CD8-positive, alpha-beta T cell (primary cell): ENCODE measurements at regions of chr2 and their contacts with region 1.

Region 1: GRCh38 chr2:160406591-160407392 is 86.8 kb downstream of the RBMS1 start:
- DNase-seq: peak; percentile 56 to 97 (median 74)
- ATAC-seq: peak; percentile 84
- H3K4me3 ChIP-seq: peak overlapping the region; percentile 52 to 70
- H3K4me3 Mint-ChIP-seq: peak overlapping the region; percentile 93
- H3K27ac ChIP-seq: peak overlapping the region; percentile 73
- H3K27ac Mint-ChIP-seq: peak overlapping the region; percentile 98
- H3K4me1 ChIP-seq: peaks cover 73% of the 10 kb centered on the region
- H3K4me1 Mint-ChIP-seq: peaks cover 82% of the 10 kb centered on the region
- H3K27me3 ChIP-seq: no peaks in the 10 kb centered on the region
- H3K27me3 Mint-ChIP-seq: no peaks in the 10 kb centered on the region
- CTCF ChIP-seq: no peak

Region 2: DNA sequence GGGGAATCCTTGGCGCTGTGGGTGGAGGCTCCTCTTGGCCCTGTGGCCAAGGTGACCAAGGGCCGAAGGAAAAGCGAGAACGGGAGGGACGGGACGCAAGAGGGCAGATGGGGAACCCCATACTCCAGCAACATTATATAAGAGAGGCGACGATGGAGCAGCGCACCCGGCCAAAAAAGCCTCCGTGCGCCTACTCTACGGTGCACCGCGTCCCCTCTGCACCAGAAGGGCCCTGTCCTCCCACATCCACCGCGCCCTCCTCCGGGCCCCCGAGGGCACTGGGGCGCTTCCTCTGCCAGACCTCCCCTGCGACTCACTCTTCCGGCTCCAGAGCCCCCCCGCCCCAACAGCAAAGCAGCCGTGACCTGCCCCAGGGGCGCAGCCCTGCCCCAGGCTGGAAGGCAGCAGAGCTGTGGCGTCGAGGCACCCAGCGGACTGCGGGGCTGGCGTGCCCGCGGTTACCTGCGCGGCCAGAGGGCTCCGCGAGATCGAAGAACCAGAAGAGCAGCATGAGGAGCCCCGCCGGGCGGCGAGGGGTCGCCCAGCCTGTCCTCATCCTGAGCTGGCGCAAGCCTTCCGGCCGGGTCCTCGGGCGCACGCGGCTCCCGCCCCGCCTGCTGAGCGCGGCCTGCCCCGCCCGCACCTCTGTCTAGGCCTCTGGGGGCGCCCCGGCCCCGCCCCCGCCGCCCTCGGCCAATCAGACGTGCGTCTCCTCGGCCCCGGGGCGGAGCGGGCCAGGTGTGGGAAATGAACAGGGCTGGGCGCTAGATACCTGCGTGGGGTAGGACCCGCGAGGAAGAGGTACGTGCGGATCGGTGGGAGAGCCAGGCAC is 502.4 kb before region 1 on chr2:
- CTCF ChIA-PET with region 1: no interaction called
- POLR2A ChIA-PET with region 1: no interaction called
- intact Hi-C with region 1: loop called in 1 of 2 experiments (anchors 5 kb)
- DNase-seq: peak; percentile 68 to 90 (median 81)
- ATAC-seq: peak; percentile 81
- H3K4me3 ChIP-seq: peak within 1 kb of the TSS; percentile 91 to 97
- H3K4me3 Mint-ChIP-seq: peak within 1 kb of the TSS; percentile 98
- H3K27ac ChIP-seq: peak within 1 kb of the TSS; percentile 90 to 94
- H3K27ac Mint-ChIP-seq: peak within 1 kb of the TSS; percentile 98
- H3K4me1 ChIP-seq: peaks cover 12% of the 10 kb centered on the region
- H3K4me1 Mint-ChIP-seq: peaks cover 46% of the 10 kb centered on the region
- H3K27me3 ChIP-seq: no peaks in the 10 kb centered on the region
- H3K27me3 Mint-ChIP-seq: no peaks in the 10 kb centered on the region
- CTCF ChIP-seq: no peak

Region 3: GRCh38 chr2:160394153-160394552 is 12.6 kb before region 1 on chr2:
- CTCF ChIA-PET with region 1: interaction called, 4 read pairs
- POLR2A ChIA-PET with region 1: interaction called, 10 read pairs
- intact Hi-C with region 1: loop called (anchors 1 kb)
- DNase-seq: peak in 2 of 9 experiments; percentile 69 to 80
- ATAC-seq: peak; percentile 92
- H3K4me3 ChIP-seq: peak overlapping the region in 1 of 2 experiments; percentile 21
- H3K4me3 Mint-ChIP-seq: peak overlapping the region; percentile 50
- H3K27ac ChIP-seq: peak overlapping the region in 1 of 2 experiments; percentile 49
- H3K27ac Mint-ChIP-seq: peak overlapping the region; percentile 86
- H3K4me1 ChIP-seq: peaks cover 88% of the 10 kb centered on the region
- H3K4me1 Mint-ChIP-seq: peaks cover 64% of the 10 kb centered on the region
- H3K27me3 ChIP-seq: no peaks in the 10 kb centered on the region
- H3K27me3 Mint-ChIP-seq: no peaks in the 10 kb centered on the region
- CTCF ChIP-seq: no peak

Region 4: DNA sequence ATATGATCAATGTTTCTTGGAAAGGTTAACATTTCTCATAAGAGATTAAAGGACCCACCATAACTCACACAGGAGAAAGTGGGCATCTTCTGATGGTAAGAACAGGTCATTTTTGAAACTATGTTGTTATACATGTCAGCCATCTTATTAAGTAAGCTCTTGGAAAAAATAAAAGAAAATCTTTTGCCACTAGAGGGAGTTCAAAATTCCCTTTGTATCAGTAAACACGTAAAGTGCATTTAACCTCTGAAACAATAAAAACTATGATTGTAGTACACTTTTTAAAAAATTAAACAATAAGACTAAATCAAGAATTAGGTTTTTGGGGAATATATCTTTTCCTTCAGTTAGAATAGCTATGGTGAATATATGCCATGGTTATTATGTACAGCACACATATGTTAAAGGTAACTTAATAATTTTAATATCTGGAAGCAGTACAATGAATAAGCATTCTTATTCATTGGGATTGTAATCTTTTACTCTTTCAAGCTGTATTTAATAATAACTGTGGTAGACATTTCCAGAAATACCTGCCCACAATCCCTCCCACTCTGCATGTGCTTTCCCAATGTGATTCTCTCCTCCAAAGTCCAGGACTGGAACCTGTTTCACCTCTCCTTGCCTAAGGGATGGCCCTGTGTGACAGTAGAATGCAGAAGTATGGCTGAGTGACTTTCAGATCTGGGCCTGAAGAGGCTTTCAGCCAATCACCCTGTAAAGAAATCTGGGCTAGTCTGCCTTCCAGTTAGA is 22.6 kb after region 1 on chr2:
- CTCF ChIA-PET with region 1: interaction called, 16 read pairs
- POLR2A ChIA-PET with region 1: interaction called, 32 read pairs
- intact Hi-C with region 1: loop called (anchors 1 kb)
- DNase-seq: peak in 2 of 9 experiments; percentile 72 to 81
- ATAC-seq: peak; percentile 53
- H3K4me3 ChIP-seq: no peak overlapping the region
- H3K4me3 Mint-ChIP-seq: peak overlapping the region; percentile 26
- H3K27ac ChIP-seq: peak overlapping the region in 1 of 2 experiments; percentile 77
- H3K27ac Mint-ChIP-seq: peak overlapping the region; percentile 92
- H3K4me1 ChIP-seq: peaks cover 42% of the 10 kb centered on the region
- H3K4me1 Mint-ChIP-seq: peaks cover 71% of the 10 kb centered on the region
- H3K27me3 ChIP-seq: no peaks in the 10 kb centered on the region
- H3K27me3 Mint-ChIP-seq: no peaks in the 10 kb centered on the region
- CTCF ChIP-seq: peak; percentile 84

Region 5: GRCh38 chr2:160454070-160454797 is 47.4 kb after region 1 on chr2:
- CTCF ChIA-PET with region 1: no interaction called
- POLR2A ChIA-PET with region 1: no interaction called
- intact Hi-C with region 1: no loop called
- DNase-seq: no peak
- ATAC-seq: no peak
- H3K4me3 ChIP-seq: no peak overlapping the region
- H3K4me3 Mint-ChIP-seq: no peak overlapping the region
- H3K27ac ChIP-seq: no peak overlapping the region
- H3K27ac Mint-ChIP-seq: no peak overlapping the region
- H3K4me1 ChIP-seq: peaks cover 7% of the 10 kb centered on the region
- H3K4me1 Mint-ChIP-seq: peaks cover 35% of the 10 kb centered on the region
- H3K27me3 ChIP-seq: no peaks in the 10 kb centered on the region
- H3K27me3 Mint-ChIP-seq: no peaks in the 10 kb centered on the region
- CTCF ChIP-seq: no peak

Region 6: GRCh38 chr2:160464996-160465395 is 58.2 kb after region 1 on chr2:
- CTCF ChIA-PET with region 1: no interaction called
- POLR2A ChIA-PET with region 1: no interaction called
- intact Hi-C with region 1: no loop called
- DNase-seq: no peak
- ATAC-seq: no peak
- H3K4me3 ChIP-seq: no peak overlapping the region
- H3K4me3 Mint-ChIP-seq: no peak overlapping the region
- H3K27ac ChIP-seq: no peak overlapping the region
- H3K27ac Mint-ChIP-seq: no peak overlapping the region
- H3K4me1 ChIP-seq: no peaks in the 10 kb centered on the region
- H3K4me1 Mint-ChIP-seq: peaks cover 69% of the 10 kb centered on the region
- H3K27me3 ChIP-seq: no peaks in the 10 kb centered on the region
- H3K27me3 Mint-ChIP-seq: no peaks in the 10 kb centered on the region
- CTCF ChIP-seq: no peak

Region 7: GRCh38 chr2:161160226-161161069 is 753.7 kb after region 1 on chr2 and contains the start of gene TANK:
- CTCF ChIA-PET with region 1: no interaction called
- POLR2A ChIA-PET with region 1: no interaction called
- intact Hi-C with region 1: loop called in 1 of 2 experiments (anchors 10 kb)
- DNase-seq: peak; percentile 77 to 96 (median 87)
- ATAC-seq: peak; percentile 91
- H3K4me3 ChIP-seq: peak within 1 kb of the TSS; percentile 72 to 97
- H3K4me3 Mint-ChIP-seq: peak within 1 kb of the TSS; percentile 96
- H3K27ac ChIP-seq: peak within 1 kb of the TSS; percentile 70 to 96
- H3K27ac Mint-ChIP-seq: peak within 1 kb of the TSS; percentile 93
- H3K4me1 ChIP-seq: peaks cover 21% of the 10 kb centered on the region
- H3K4me1 Mint-ChIP-seq: peaks cover 51% of the 10 kb centered on the region
- H3K27me3 ChIP-seq: no peaks in the 10 kb centered on the region
- H3K27me3 Mint-ChIP-seq: no peaks in the 10 kb centered on the region
- CTCF ChIP-seq: no peak
- total RNA-seq, gene TANK: 63.0 to 79.1 TPM